Naive thymus-derived CD4-positive, alpha-beta T cell (primary cell): ENCODE measurements at regions of chr1 and their contacts with region 1.

Region 1: DNA sequence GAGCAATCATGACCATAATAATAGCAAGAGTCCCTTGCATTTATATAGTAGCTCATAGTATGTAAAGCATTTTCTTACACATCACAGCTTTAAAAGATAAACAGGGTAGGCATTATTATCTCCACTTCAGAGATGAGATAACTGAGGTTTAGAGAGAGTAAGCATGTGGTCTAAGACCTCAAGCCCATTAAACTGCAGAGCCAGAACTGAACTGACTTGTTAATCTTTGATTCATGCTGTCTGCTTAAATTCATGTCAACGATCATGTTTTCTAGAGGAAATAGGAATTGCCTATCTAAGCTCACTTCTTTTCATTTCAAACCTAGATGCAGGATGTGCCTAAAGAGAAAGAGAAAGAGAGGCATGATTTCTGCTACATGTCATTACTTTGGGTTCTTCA is 524.8 kb downstream of the PTPRC start:
- DNase-seq: no peak
- ATAC-seq: no peak
- H3K4me3 ChIP-seq: no peak overlapping the region
- H3K4me3 Mint-ChIP-seq: peak overlapping the region in 1 of 10 donors; percentile 26
- H3K27ac ChIP-seq: no peak overlapping the region
- H3K27ac Mint-ChIP-seq: peak overlapping the region in 1 of 9 donors; percentile 39
- H3K4me1 ChIP-seq: peaks cover 3 to 4% of the 10 kb centered on the region in 2 donors
- H3K4me1 Mint-ChIP-seq: peaks cover 5 to 45% (median 24%) of the 10 kb centered on the region in 7 donors
- H3K27me3 ChIP-seq: no peaks in the 10 kb centered on the region
- H3K27me3 Mint-ChIP-seq: peaks cover 0 to 3% (median 0%) of the 10 kb centered on the region in 5 donors

Region 2: GRCh38 chr1:198809247-198809646 is 354.4 kb before region 1 on chr1:
- CTCF ChIA-PET with region 1: no interaction called
- POLR2A ChIA-PET with region 1: no interaction called
- intact Hi-C with region 1: no loop called
- DNase-seq: no peak
- ATAC-seq: no peak
- H3K4me3 ChIP-seq: no peak overlapping the region
- H3K4me3 Mint-ChIP-seq: no peak overlapping the region
- H3K27ac ChIP-seq: no peak overlapping the region
- H3K27ac Mint-ChIP-seq: no peak overlapping the region
- H3K4me1 ChIP-seq: no peaks in the 10 kb centered on the region
- H3K4me1 Mint-ChIP-seq: peaks cover 0 to 3% (median 0%) of the 10 kb centered on the region in 7 donors
- H3K27me3 ChIP-seq: no peaks in the 10 kb centered on the region
- H3K27me3 Mint-ChIP-seq: peaks cover 0 to 3% (median 0%) of the 10 kb centered on the region in 5 donors

Region 3: DNA sequence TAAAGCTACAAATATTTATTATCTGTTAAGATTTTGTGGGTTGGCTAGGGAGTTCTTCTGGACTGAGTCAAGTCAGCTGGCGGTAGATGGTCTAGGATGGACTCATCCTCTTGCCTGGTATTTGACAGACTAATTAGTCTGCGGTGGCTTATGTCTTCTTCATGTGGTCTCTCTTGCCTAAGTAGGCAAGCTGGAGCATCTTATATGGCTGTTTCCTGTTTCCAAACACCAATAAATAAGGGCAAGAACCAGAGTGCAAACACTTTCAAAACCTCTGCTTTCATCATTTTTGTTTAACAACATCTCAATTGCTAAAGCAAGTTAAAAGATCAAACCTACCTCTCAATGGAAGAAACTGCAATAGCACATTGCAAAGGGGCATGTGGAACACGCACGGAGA is 40.1 kb before region 1 on chr1:
- CTCF ChIA-PET with region 1: no interaction called
- POLR2A ChIA-PET with region 1: no interaction called
- intact Hi-C with region 1: loop called in 1 of 2 experiments (anchors 5 kb)
- DNase-seq: peak in 1 of 9 donors; percentile 5
- ATAC-seq: no peak
- H3K4me3 ChIP-seq: no peak overlapping the region
- H3K4me3 Mint-ChIP-seq: peak overlapping the region in 1 of 10 donors; percentile 29
- H3K27ac ChIP-seq: no peak overlapping the region
- H3K27ac Mint-ChIP-seq: no peak overlapping the region
- H3K4me1 ChIP-seq: no peaks in the 10 kb centered on the region
- H3K4me1 Mint-ChIP-seq: peaks cover 0 to 15% (median 4%) of the 10 kb centered on the region in 7 donors
- H3K27me3 ChIP-seq: no peaks in the 10 kb centered on the region
- H3K27me3 Mint-ChIP-seq: peaks cover 0 to 12% (median 0%) of the 10 kb centered on the region in 5 donors